Psoas muscle (tissue), 8 donors: ENCODE measurements at regions of chr4 and their contacts with region 1.

Region 1: DNA sequence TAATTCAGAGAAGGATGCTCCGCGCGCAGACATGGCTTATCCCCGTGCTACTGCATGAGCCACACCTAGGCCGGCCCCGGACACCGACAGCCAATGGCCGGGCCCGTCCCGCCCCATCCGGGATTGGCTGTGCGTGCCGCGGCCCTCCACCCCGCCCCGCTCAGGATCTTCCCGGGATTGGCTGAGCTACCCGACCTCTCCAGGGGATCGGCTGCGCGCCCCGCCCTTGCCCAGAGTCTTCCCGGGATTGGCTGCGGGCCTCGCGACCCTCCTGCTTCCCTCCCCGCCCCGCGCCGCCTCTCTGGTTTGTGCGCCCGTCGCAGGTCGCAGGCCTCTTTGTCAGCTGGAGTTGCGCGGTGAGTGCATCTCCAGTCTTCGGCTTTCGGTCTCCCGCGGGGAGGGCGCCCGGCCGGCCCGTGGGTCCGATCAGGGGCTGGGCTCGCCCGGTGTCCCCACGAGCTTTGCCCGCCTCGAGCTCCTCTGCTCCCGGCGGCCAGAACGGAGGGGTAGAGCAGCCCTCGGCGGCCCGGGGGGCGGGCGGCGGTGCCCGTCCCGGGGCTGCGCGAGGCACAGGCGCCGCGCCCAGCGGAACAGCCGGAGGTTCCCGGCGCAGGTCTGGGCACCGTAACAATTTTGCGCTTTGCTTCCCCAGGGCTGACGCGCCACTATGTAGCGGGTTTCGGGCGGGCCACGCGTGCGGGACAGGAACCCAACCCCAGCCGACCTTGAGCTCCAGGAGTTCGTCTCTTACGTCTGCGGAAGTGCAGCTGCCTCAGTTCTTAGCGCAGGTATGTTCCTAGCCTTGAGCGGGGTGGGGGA is 38.8 kb downstream of the ERVMER34-1 start:
- DNase-seq: peak; percentile 99
- ATAC-seq: peak; percentile 98 to 99 (median 98)
- H3K4me3 ChIP-seq: peak overlapping the region; percentile 93
- H3K27ac ChIP-seq: peak overlapping the region; percentile 97
- H3K4me1 ChIP-seq: peaks cover 25% of the 10 kb centered on the region
- H3K27me3 ChIP-seq: no peaks in the 10 kb centered on the region
- CTCF ChIP-seq: no peak

Region 2: DNA sequence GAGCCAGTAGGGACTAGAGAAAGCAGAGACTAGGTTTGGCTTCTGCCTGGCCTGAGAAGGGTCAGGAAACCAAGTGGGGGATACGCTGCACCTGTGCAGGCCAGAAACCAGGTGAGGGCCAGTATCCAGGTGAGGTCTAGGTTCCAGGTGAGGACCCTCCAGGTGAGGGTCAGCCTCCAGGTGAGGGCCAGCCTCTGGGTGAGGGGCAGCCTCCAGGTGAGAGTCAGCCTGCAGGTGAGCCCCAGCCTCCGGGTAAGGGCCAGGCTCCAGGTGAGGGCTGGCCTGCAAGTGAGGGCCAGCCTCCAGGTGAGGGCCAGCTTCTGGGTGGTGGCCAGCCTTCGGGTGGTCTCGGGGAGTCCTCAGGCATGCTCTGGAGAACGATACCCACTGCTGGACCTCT is 292.1 kb before region 1 on chr4:
- intact Hi-C with region 1: no loop called
- DNase-seq: no peak
- ATAC-seq: no peak
- H3K4me3 ChIP-seq: no peak overlapping the region
- H3K27ac ChIP-seq: no peak overlapping the region
- H3K4me1 ChIP-seq: no peaks in the 10 kb centered on the region
- H3K27me3 ChIP-seq: no peaks in the 10 kb centered on the region
- CTCF ChIP-seq: no peak

Region 3: GRCh38 chr4:52837726-52838558 is 125.6 kb after region 1 on chr4:
- intact Hi-C with region 1: loop called in 1 of 2 experiments (anchors 5 kb)
- DNase-seq: no peak
- ATAC-seq: peak in 3 of 4 donors; percentile 46 to 74 (median 60)
- H3K4me3 ChIP-seq: no peak overlapping the region
- H3K27ac ChIP-seq: no peak overlapping the region
- H3K4me1 ChIP-seq: peaks cover 39% of the 10 kb centered on the region
- H3K27me3 ChIP-seq: no peaks in the 10 kb centered on the region
- CTCF ChIP-seq: no peak

Region 4: GRCh38 chr4:52861879-52862616 is 149.7 kb after region 1 on chr4 and contains the start of gene RASL11B:
- intact Hi-C with region 1: loop called (anchors 10 kb)
- DNase-seq: peak; percentile 87 to 89
- ATAC-seq: peak; percentile 99 to 100 (median 100)
- H3K4me3 ChIP-seq: peak within 1 kb of the TSS; percentile 73
- H3K27ac ChIP-seq: peak within 1 kb of the TSS; percentile 19
- H3K4me1 ChIP-seq: peaks cover 8% of the 10 kb centered on the region
- H3K27me3 ChIP-seq: no peaks in the 10 kb centered on the region
- CTCF ChIP-seq: peak; percentile 3
- total RNA-seq, gene RASL11B: 0.26 to 1.8 (median 0.40) TPM in 3 of 4 donors, not detected in the other